ENCODE measurements at regions of chr10 and their contacts with region 1.

Region 1: DNA sequence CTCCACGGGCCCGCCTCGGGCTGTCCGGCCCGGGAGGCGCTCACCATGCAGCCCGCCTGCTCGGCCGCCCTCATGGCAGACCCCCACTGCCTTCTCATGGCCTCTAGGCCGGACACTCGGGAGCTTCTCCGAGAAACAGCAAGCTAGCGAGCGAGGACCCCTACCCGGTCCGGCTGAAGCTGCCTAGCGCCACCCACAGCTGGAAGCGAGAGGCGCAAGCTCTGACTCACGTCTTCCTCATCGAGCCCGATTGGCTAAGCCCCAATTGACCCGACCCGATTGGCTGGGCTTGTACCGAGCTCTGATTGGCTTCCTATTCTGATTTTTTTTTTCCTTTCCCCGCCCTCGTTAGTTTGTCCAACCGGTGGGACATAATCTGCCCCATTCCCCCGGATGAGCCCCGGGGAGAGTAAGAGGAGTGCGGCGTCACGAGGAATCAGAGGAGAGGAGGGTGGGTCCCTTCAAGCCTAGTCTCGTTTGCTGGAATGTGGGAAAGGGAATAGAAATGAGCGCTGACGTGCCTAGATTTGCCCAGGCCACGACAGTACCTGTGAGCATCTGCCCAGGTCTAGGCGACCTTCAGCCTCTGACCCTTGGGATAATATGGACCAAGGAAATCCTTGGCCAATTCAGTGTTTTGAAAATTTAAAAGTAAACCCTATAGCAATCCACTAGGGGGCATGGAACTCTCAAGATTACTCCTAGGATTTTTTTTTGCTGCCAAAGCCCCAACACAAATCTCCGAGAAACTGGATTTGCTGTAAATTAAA is at the start of gene TYSND1:
- DNase-seq: peak; percentile 92
- ATAC-seq: peak; percentile 83
- H3K4me3 Mint-ChIP-seq: peak within 1 kb of the TSS; percentile 89
- H3K27ac Mint-ChIP-seq: peak within 1 kb of the TSS; percentile 95
- H3K4me1 Mint-ChIP-seq: peaks cover 23% of the 10 kb centered on the region
- H3K27me3 Mint-ChIP-seq: no peaks in the 10 kb centered on the region
- total RNA-seq, gene TYSND1: 18.4 to 19.0 TPM

Region 2: GRCh38 chr10:69957886-69958555 is 188.7 kb before region 1 on chr10:
- POLR2A ChIA-PET with region 1: no interaction called
- DNase-seq: no peak
- ATAC-seq: peak; percentile 84
- H3K4me3 Mint-ChIP-seq: no peak overlapping the region
- H3K27ac Mint-ChIP-seq: no peak overlapping the region
- H3K4me1 Mint-ChIP-seq: peaks cover 2% of the 10 kb centered on the region
- H3K27me3 Mint-ChIP-seq: peaks cover 14% of the 10 kb centered on the region

Region 3: DNA sequence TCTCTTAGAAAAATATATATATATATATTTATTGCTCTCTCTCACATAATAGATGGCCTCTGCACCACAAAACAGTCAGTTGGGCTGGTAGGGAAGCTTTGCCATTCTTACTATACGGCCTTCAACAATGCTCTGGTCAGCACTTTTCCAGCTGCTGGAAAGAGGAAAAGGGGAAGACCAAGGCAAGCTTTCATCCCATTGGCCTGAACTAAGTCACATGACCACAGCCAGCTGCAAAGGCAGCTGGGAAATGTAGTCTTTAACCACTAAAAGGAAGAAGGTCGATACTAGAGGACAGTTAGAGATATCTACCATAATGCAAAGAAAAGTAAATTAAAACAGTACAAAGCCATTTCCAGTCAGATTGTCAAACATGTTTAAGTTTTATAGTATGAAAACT is 152.4 kb before region 1 on chr10:
- POLR2A ChIA-PET with region 1: no interaction called
- DNase-seq: no peak
- ATAC-seq: no peak
- H3K4me3 Mint-ChIP-seq: no peak overlapping the region
- H3K27ac Mint-ChIP-seq: no peak overlapping the region
- H3K4me1 Mint-ChIP-seq: no peaks in the 10 kb centered on the region
- H3K27me3 Mint-ChIP-seq: peaks cover 34% of the 10 kb centered on the region

Region 4: DNA sequence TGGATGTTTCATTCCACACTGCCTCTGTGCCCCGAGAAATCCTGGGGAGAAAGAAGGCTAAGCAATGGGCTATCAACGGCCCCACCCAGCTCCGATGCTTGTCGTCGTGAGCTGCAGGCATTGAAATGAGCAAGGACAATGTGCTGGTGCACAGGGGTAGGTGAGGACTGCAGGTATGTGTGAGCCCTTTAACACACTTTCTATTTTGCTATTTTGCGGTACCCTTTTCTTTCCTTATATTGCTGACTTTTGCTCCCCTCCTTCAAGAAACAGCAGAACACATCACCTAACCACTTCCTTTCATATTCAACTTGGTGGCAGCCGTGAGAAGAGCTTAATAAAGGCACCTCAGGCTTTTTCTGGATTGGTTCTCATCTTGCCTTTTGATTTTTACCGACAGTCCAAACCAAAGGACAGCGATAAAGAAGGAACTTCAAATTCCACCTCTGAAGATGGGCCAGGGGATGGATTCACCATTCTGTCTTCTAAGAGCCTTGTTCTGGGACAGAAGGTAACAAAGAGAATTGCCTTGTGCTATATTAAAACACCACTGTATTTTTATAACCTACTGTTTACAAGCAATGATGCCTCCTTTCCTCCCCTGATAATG is 53.2 kb before region 1 on chr10:
- POLR2A ChIA-PET with region 1: interaction called, 45 read pairs
- DNase-seq: peak; percentile 46
- ATAC-seq: peak; percentile 83
- H3K4me3 Mint-ChIP-seq: peak overlapping the region; percentile 91
- H3K27ac Mint-ChIP-seq: peak overlapping the region; percentile 98
- H3K4me1 Mint-ChIP-seq: peaks cover 37% of the 10 kb centered on the region
- H3K27me3 Mint-ChIP-seq: no peaks in the 10 kb centered on the region

Region 5: DNA sequence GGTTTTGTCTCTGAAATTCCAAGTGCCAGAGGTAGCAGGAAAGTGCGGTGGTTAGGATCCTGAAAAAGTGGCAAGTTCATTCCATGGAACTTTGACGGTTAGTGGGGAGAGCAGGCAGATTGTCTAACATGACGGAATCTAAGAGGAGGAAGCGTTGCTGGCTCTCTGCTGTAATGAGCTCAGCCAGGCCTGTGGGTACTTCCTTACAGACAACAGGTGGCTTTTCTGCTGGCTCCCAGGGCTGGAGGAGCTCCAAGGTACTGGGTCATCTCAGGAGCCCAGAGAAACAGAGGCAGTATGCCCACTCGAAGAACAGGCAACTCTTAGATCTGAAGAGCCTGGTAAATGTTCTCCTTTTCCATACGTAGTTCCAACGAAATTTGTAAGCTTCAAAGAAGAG is 11.0 kb before region 1 on chr10:
- POLR2A ChIA-PET with region 1: interaction called, 10 read pairs
- DNase-seq: no peak
- ATAC-seq: no peak
- H3K4me3 Mint-ChIP-seq: no peak overlapping the region
- H3K27ac Mint-ChIP-seq: no peak overlapping the region
- H3K4me1 Mint-ChIP-seq: peaks cover 23% of the 10 kb centered on the region
- H3K27me3 Mint-ChIP-seq: no peaks in the 10 kb centered on the region

Region 6: GRCh38 chr10:70162892-70163201 is 16.2 kb after region 1 on chr10:
- POLR2A ChIA-PET with region 1: interaction called, 78 read pairs
- DNase-seq: no peak
- ATAC-seq: peak; percentile 93
- H3K4me3 Mint-ChIP-seq: peak overlapping the region; percentile 69
- H3K27ac Mint-ChIP-seq: peak overlapping the region; percentile 88
- H3K4me1 Mint-ChIP-seq: peaks cover 60% of the 10 kb centered on the region
- H3K27me3 Mint-ChIP-seq: no peaks in the 10 kb centered on the region

Region 7: DNA sequence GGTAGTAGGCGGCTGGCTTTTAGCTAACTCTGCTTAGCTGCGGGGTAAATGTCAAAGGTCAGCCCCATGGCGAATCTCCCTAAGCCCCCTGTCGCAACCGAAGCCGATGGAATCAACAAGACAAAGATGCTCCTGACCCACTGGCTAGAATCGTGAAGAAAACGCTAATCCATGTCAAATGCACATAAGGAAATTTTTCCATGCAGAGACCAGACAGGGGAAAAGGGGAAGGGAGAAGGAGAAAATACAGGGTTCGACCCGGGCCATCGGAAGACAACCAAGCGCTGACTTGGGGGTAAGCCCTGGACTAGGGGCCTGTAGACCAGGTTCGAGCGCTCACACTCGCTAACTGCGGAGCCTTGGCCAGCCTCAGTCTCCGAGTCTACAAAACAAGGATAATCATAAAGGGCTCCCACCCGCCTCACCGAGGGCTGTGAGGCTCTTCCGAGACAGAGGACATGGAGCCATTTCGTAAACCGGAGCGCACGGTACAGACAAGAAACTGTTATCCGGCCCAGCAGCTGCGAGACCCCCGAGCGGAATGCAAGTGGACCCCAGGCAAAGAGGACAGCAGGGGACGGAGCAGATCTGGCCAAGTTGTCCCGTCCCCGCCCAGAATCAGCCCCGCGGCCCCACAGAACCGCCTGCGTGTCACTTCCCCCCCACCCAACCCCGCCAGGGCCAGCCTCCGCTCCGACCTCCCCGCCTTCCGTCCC is 23.1 kb after region 1 on chr10:
- POLR2A ChIA-PET with region 1: interaction called, 78 read pairs
- DNase-seq: no peak
- ATAC-seq: peak; percentile 5
- H3K4me3 Mint-ChIP-seq: peak overlapping the region; percentile 85
- H3K27ac Mint-ChIP-seq: peak overlapping the region; percentile 98
- H3K4me1 Mint-ChIP-seq: peaks cover 57% of the 10 kb centered on the region
- H3K27me3 Mint-ChIP-seq: no peaks in the 10 kb centered on the region

Region 8: DNA sequence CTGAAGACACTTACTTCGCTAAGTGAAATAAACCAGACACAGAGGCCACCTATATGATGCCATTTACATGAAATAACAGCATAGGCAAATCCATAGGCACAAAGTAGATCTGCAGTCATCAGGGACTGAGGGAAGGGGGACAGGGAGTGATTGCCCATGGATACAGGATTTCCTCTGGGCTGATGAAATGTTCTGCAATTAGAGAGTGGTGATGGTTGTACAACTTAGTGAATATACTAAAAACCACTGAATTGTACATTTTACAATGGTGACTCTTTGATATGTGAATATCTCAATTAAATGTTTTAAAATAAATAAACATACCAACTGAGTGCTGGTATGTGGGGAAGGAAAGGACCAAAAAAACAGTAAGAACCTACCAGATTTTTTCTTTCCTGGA is 66.2 kb after region 1 on chr10:
- POLR2A ChIA-PET with region 1: no interaction called
- DNase-seq: no peak
- ATAC-seq: no peak
- H3K4me3 Mint-ChIP-seq: no peak overlapping the region
- H3K27ac Mint-ChIP-seq: no peak overlapping the region
- H3K4me1 Mint-ChIP-seq: no peaks in the 10 kb centered on the region
- H3K27me3 Mint-ChIP-seq: no peaks in the 10 kb centered on the region

Measured in activated naive CD8-positive, alpha-beta T cell treated with anti-CD3 and anti-CD28 coated beads, Interleukin-2, amount 10 ng/mL, durations not matched to agents 7 days and 5 days (primary cell).